Sciatic nerve (tissue), 2 donors: ENCODE measurements at regions of chr19 and their contacts with region 1.

Region 1: GRCh38 chr19:51181913-51182419 is 39.9 kb downstream of the SIGLEC7 start:
- DNase-seq: peak; percentile 46
- ATAC-seq: peak; percentile 24

Region 2: DNA sequence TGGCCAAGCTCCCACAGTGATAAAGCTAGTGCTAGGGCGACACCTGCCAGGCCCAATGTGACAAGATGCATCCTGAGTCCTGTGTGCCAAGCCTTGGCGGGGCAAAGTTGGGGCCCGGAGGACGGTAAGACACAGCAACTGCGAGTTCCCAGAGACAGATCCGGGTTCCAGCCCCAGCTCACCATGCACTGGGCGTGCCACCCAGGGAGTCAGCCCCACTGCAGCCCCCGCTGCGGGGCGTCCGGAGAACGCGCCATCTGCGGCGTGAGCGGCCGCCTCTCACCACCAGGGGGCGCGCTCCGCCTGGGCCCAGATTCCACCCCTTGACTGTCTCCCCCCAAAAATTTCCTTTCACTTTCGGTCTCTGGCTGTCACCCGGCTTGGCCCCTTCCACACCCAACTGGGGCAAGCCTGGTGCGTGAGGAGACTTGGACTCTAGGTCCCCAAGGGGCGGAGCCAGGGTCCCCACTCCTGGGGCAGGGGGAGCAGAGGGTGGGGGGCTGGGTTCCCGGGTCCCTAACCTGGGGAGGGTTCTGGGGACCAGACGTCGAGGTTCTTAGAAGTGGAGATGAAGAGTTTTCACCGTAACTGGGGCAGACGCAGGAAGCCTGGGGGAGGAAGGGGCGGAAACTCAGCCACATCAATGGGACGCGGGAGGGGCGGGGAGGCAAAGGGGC is 1708.0 kb before region 1 on chr19 and contains the start of gene FLT3LG:
- intact Hi-C with region 1: no loop called
- DNase-seq: peak; percentile 88
- ATAC-seq: peak; percentile 80
- total RNA-seq, gene FLT3LG: 19.6 TPM

Region 3: GRCh38 chr19:51097166-51097738 is 84.7 kb before region 1 on chr19:
- intact Hi-C with region 1: no loop called
- DNase-seq: peak; percentile 83
- ATAC-seq: peak; percentile 65

Region 4: GRCh38 chr19:51158474-51159129 is 23.4 kb before region 1 on chr19:
- intact Hi-C with region 1: loop called (anchors 1 kb)
- DNase-seq: peak; percentile 78
- ATAC-seq: peak; percentile 55